SK-N-SH (cell line): ENCODE measurements at regions of chr2 and their contacts with region 1.

Region 1: DNA sequence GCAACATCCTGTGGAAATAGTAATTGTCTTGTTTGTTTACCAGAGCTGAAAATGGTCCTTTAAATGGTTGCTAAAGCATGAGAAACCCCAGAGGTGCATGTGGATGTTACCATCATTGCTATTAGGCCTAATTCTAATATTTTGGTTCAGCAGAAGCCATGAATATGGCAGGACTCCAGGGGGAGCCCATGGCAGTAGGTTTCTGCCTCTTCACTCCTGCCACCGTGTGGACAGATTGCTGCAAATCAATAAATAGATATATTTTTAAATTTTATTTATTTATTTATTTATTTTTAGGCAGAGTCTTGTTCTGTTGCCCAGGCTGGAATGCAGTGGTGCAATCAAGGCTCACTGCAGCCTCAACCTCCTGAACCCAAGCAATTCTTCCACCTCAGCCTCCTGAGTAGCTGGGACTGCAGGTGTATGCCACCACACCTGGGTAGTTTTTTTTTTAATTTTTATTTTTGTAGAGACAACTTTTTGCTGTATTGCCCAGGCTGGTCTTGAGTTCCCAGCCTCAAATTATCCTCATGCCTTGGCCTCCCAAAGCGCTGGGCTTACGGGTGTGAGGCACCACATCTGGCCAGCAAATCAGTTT is 54.9 kb upstream of the CAPN13 start:
- DNase-seq: peak; percentile 83
- H3K4me3 ChIP-seq: peak overlapping the region in 1 of 2 experiments; percentile 43; a peak in 1 of 4 replicates
- H3K27ac ChIP-seq: peak overlapping the region in 1 of 2 experiments; percentile 62; a peak in 2 of 4 replicates
- H3K4me1 ChIP-seq: peaks cover 0 to 30% of the 10 kb centered on the region in 2 experiments; a peak in 2 of 4 replicates
- H3K27me3 ChIP-seq: no peaks in the 10 kb centered on the region
- CTCF ChIP-seq: peak; percentile 65
- EP300 ChIP-seq: no peak
- RAD21 ChIP-seq: peak; percentile 87

Region 2: GRCh38 chr2:28952816-28953211 is 1909.3 kb before region 1 on chr2:
- CTCF ChIA-PET with region 1: no interaction called
- POLR2A ChIA-PET with region 1: no interaction called
- DNase-seq: peak; percentile 51
- H3K4me3 ChIP-seq: no peak overlapping the region
- H3K27ac ChIP-seq: no peak overlapping the region
- H3K4me1 ChIP-seq: peaks cover 0 to 9% of the 10 kb centered on the region in 2 experiments; a peak in 2 of 4 replicates
- H3K27me3 ChIP-seq: no peaks in the 10 kb centered on the region
- CTCF ChIP-seq: no peak
- EP300 ChIP-seq: no peak
- RAD21 ChIP-seq: peak; percentile 58

Region 3: GRCh38 chr2:30721668-30722647 is 140.2 kb before region 1 on chr2:
- CTCF ChIA-PET with region 1: interaction called, 291 read pairs
- POLR2A ChIA-PET with region 1: no interaction called
- DNase-seq: no peak
- H3K4me3 ChIP-seq: no peak overlapping the region
- H3K27ac ChIP-seq: no peak overlapping the region
- H3K4me1 ChIP-seq: no peaks in the 10 kb centered on the region; a peak in 1 of 4 replicates
- H3K27me3 ChIP-seq: peaks cover 18% of the 10 kb centered on the region; the same call in 1 of the 2 replicates
- CTCF ChIP-seq: no peak
- EP300 ChIP-seq: no peak
- RAD21 ChIP-seq: no peak

Region 4: GRCh38 chr2:30770816-30771576 is 91.2 kb before region 1 on chr2:
- CTCF ChIA-PET with region 1: interaction called, 11 read pairs
- POLR2A ChIA-PET with region 1: no interaction called
- DNase-seq: peak; percentile 79
- H3K4me3 ChIP-seq: no peak overlapping the region
- H3K27ac ChIP-seq: peak overlapping the region in 1 of 2 experiments; percentile 64; a peak in 2 of 4 replicates
- H3K4me1 ChIP-seq: peaks cover 0 to 38% of the 10 kb centered on the region in 2 experiments; a peak in 2 of 4 replicates
- H3K27me3 ChIP-seq: no peaks in the 10 kb centered on the region
- CTCF ChIP-seq: no peak
- EP300 ChIP-seq: peak in 1 of 2 experiments; percentile 94; a peak in 2 of 4 replicates
- RAD21 ChIP-seq: peak; percentile 3; the same call in 1 of the 2 replicates

Region 5: DNA sequence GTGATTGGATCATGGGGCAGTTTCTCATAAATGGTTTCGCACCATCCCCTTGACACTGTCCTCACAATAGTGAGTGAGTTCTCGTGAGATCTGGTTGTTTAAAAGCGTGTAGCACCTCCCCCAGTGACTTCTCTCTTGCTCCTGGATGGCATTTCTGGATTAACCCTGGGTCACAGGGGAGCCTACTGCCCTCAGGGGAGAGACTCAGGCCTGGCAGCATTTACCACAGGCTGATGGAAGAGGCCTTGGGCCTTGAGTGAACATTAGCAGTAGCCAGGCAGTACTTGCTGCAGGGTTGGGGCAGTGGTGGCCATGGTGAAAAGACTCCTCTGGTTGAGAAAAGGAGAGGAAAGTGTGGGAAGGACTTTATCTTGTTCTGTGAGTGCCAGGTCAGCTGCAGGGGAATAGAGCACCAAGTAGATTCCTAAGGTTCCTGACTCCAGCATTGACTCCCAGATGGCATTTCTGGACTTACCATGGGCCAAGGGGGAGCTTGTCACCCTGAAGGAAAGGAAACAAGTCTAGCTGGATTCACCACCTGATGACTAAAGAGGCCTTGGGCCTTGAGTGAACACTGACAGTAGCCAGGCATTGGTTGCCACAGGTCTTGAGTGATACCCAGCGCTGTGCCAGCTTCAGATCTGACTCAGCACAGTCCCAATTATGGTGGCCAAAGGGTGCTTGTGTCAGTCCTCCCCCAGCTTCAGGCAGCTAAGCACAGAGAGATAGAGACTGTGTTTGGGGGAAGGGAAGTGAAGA is 15.0 kb before region 1 on chr2:
- CTCF ChIA-PET with region 1: interaction called, 22 read pairs
- POLR2A ChIA-PET with region 1: no interaction called
- DNase-seq: no peak
- H3K4me3 ChIP-seq: no peak overlapping the region
- H3K27ac ChIP-seq: no peak overlapping the region
- H3K4me1 ChIP-seq: no peaks in the 10 kb centered on the region
- H3K27me3 ChIP-seq: no peaks in the 10 kb centered on the region
- CTCF ChIP-seq: no peak
- EP300 ChIP-seq: no peak
- RAD21 ChIP-seq: no peak

Region 6: DNA sequence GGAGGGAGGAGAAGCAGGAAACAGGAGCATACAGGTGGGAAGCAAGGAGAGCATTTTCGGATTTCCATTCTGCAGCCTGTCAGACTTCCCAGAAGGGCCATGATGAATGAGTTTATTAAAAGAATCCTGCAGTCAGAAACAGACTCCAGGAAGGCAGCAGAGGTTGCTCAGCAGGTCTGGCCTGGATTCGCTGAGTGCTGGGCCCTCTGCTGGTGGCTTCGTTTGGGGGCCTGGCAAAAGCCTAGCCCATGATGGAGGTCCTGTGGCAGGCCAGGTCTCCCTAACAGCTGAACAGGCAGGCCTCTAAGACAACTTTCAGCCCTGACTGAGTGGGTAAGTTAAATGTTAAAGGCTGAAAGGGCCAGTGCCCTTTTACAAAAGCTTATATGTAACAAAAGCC is 53.3 kb after region 1 on chr2:
- CTCF ChIA-PET with region 1: interaction called, 13 read pairs
- POLR2A ChIA-PET with region 1: no interaction called
- DNase-seq: peak; percentile 77
- H3K4me3 ChIP-seq: no peak overlapping the region
- H3K27ac ChIP-seq: peak overlapping the region in 1 of 2 experiments; percentile 71; a peak in 2 of 4 replicates
- H3K4me1 ChIP-seq: peaks cover 0 to 11% of the 10 kb centered on the region in 2 experiments; a peak in 1 of 4 replicates
- H3K27me3 ChIP-seq: no peaks in the 10 kb centered on the region
- CTCF ChIP-seq: peak; percentile 22; the same call in 1 of the 2 replicates
- EP300 ChIP-seq: 0 out of 4 replicates have a peak, but pooled peaks of 1 of the 2 experiments have one; percentile 21
- RAD21 ChIP-seq: peak; percentile 71

Region 7: DNA sequence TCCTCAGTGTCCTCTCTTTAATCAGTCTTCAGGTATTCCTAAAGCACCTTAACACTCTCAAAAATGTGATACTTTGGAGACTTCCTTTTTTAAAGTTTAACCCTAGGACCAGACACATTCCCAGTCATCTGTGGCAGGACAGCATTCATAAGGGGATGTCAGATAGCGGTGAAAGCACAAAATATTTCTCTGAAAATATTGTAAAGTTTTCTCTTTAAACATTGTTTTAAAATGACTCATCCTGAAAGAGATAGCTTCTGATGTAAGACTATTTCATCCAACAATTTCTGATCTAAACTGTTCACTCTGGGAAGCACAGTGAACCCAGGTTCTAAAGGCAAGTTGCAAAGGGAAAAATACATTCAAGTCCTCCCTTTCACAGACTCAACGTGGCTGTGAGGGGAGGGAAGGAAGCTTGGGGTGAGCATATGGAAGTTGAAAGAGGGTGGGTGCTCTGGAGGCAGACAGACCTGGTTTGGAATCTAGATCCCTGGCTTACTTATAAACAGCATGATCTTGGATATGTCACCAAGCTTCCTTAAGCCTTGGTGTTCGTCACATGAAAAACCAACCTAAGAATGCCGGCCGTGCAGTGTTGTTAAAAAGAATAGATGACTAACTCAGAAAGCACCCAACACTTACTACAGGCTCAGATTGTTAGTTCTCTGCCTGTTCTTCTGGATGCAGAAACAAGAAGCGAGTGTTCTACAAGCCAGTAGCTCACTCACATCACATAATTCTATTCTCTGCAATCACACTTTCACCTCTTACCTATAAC is 264.0 kb after region 1 on chr2:
- CTCF ChIA-PET with region 1: interaction called, 16 read pairs
- POLR2A ChIA-PET with region 1: no interaction called
- DNase-seq: no peak
- H3K4me3 ChIP-seq: no peak overlapping the region
- H3K27ac ChIP-seq: no peak overlapping the region
- H3K4me1 ChIP-seq: peaks cover 0 to 17% of the 10 kb centered on the region in 2 experiments; a peak in 2 of 4 replicates
- H3K27me3 ChIP-seq: peaks cover 6% of the 10 kb centered on the region; the same call in 1 of the 2 replicates
- CTCF ChIP-seq: no peak
- EP300 ChIP-seq: no peak
- RAD21 ChIP-seq: no peak